ENCODE measurements at regions of chr3 and their contacts with region 1.

Region 1: DNA sequence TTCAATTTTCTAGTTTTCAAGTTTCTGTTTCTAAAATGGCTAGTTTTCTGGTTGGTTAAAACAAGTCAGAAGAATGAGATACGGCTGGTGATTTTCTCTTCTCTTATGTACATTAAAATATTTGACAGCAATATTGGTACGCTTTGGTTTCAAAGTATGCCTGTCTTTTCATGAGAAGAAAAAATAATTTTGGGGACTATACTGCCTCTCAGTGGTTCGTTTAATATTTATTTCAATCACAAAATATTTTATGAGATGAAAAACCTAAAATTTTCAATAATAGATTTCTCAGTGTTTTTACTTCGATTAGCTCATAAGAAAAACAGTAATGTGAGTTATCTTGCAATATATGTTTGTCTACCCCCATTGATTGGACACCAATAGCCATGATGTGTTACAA is 72.8 kb upstream of the AADACL2 start:
- DNase-seq: no peak
- H3K4me3 ChIP-seq: no peak overlapping the region
- H3K27ac ChIP-seq: no peak overlapping the region
- H3K4me1 ChIP-seq: no peaks in the 10 kb centered on the region
- H3K27me3 ChIP-seq: no peaks in the 10 kb centered on the region
- CTCF ChIP-seq: peak in 1 of 3 experiments; percentile 14
- EP300 ChIP-seq: no peak
- POLR2A ChIP-seq: no peak

Region 2: GRCh38 chr3:151468284-151468917 is 192.5 kb before region 1 on chr3:
- intact Hi-C with region 1: loop called (anchors 10 kb)
- DNase-seq: no peak
- H3K4me3 ChIP-seq: no peak overlapping the region
- H3K27ac ChIP-seq: no peak overlapping the region
- H3K4me1 ChIP-seq: no peaks in the 10 kb centered on the region
- H3K27me3 ChIP-seq: no peaks in the 10 kb centered on the region
- CTCF ChIP-seq: peak; percentile 64 to 90 (median 81)
- EP300 ChIP-seq: no peak
- POLR2A ChIP-seq: no peak

Region 3: DNA sequence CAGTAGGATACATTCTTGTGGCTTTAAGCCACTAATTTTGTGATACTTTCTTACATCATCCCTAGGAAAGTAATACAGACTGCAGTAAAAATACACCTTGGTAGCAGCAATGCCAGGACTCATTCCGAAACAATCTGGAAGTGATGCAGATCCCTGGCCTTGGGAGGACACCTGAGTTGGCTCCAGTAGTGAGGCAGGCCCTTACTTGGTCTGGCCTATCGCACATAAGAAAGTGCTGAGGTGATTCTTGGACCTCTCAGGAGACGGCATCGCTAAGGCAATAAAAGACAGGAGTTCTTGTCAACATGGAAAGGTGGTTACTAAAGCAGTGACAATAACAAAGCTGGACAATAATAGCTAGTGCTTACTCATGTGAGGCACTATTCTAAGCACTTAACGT is 339.1 kb after region 1 on chr3:
- intact Hi-C with region 1: no loop called
- DNase-seq: no peak
- H3K4me3 ChIP-seq: no peak overlapping the region
- H3K27ac ChIP-seq: no peak overlapping the region
- H3K4me1 ChIP-seq: no peaks in the 10 kb centered on the region
- H3K27me3 ChIP-seq: no peaks in the 10 kb centered on the region
- CTCF ChIP-seq: no peak
- EP300 ChIP-seq: no peak
- POLR2A ChIP-seq: no peak

Measured in esophagus muscularis mucosa (tissue), 4 donors.